Pancreas (tissue), 10 donors: ENCODE measurements at regions of chr4 and their contacts with region 1.

Region 1: GRCh38 chr4:158778156-158778711 is 9.4 kb downstream of the FNIP2 start:
- DNase-seq: no peak
- ATAC-seq: peak in 2 of 4 donors; percentile 10 to 34
- H3K4me3 ChIP-seq: no peak overlapping the region
- H3K27ac ChIP-seq: peak overlapping the region in 1 of 4 donors; percentile 7
- H3K4me1 ChIP-seq: peaks cover 19 to 65% (median 42%) of the 10 kb centered on the region in 3 donors
- H3K27me3 ChIP-seq: no peaks in the 10 kb centered on the region
- CTCF ChIP-seq: no peak

Region 2: GRCh38 chr4:158621729-158622128 is 156.5 kb before region 1 on chr4:
- intact Hi-C with region 1: no loop called
- DNase-seq: no peak
- ATAC-seq: no peak
- H3K4me3 ChIP-seq: no peak overlapping the region
- H3K27ac ChIP-seq: no peak overlapping the region
- H3K4me1 ChIP-seq: no peaks in the 10 kb centered on the region
- H3K27me3 ChIP-seq: peaks cover 0 to 4% (median 0%) of the 10 kb centered on the region in 4 donors
- CTCF ChIP-seq: no peak

Region 3: GRCh38 chr4:158821228-158821971 is 43.2 kb after region 1 on chr4:
- intact Hi-C with region 1: loop called in 1 of 3 experiments (anchors 10 kb)
- DNase-seq: no peak
- ATAC-seq: peak in 1 of 4 donors; percentile 5
- H3K4me3 ChIP-seq: no peak overlapping the region
- H3K27ac ChIP-seq: peak overlapping the region in 3 of 4 donors; percentile 22 to 91 (median 79)
- H3K4me1 ChIP-seq: peaks cover 66 to 82% (median 80%) of the 10 kb centered on the region in 3 donors
- H3K27me3 ChIP-seq: no peaks in the 10 kb centered on the region
- CTCF ChIP-seq: no peak

Region 4: GRCh38 chr4:158845311-158846041 is 67.2 kb after region 1 on chr4:
- intact Hi-C with region 1: loop called in 1 of 3 experiments (anchors 10 kb)
- DNase-seq: peak in 1 of 6 donors; percentile 34
- ATAC-seq: peak in 3 of 4 donors; percentile 43 to 66 (median 64)
- H3K4me3 ChIP-seq: no peak overlapping the region
- H3K27ac ChIP-seq: no peak overlapping the region
- H3K4me1 ChIP-seq: peaks cover 19 to 25% (median 20%) of the 10 kb centered on the region in 3 donors
- H3K27me3 ChIP-seq: no peaks in the 10 kb centered on the region
- CTCF ChIP-seq: no peak

Region 5: GRCh38 chr4:159201168-159201567 is 422.9 kb after region 1 on chr4:
- intact Hi-C with region 1: no loop called
- DNase-seq: no peak
- ATAC-seq: no peak
- H3K4me3 ChIP-seq: no peak overlapping the region
- H3K27ac ChIP-seq: no peak overlapping the region
- H3K4me1 ChIP-seq: no peaks in the 10 kb centered on the region
- H3K27me3 ChIP-seq: no peaks in the 10 kb centered on the region
- CTCF ChIP-seq: no peak